Naive thymus-derived CD4-positive, alpha-beta T cell (primary cell): ENCODE measurements at regions of chr2 and their contacts with region 1.

Region 1: GRCh38 chr2:102520028-102520427 is 47.0 kb downstream of the SLC9A4 start:
- DNase-seq: peak in 3 of 9 donors; percentile 3 to 7 (median 5)
- ATAC-seq: peak; percentile 64
- H3K4me3 ChIP-seq: no peak overlapping the region
- H3K4me3 Mint-ChIP-seq: no peak overlapping the region
- H3K27ac ChIP-seq: no peak overlapping the region
- H3K27ac Mint-ChIP-seq: no peak overlapping the region
- H3K4me1 ChIP-seq: no peaks in the 10 kb centered on the region
- H3K4me1 Mint-ChIP-seq: peaks cover 0 to 10% (median 0%) of the 10 kb centered on the region in 7 donors
- H3K27me3 ChIP-seq: no peaks in the 10 kb centered on the region
- H3K27me3 Mint-ChIP-seq: peaks cover 0 to 5% (median 0%) of the 10 kb centered on the region in 5 donors

Region 2: GRCh38 chr2:102615622-102616436 is 95.8 kb after region 1 on chr2:
- CTCF ChIA-PET with region 1: no interaction called
- POLR2A ChIA-PET with region 1: no interaction called
- intact Hi-C with region 1: loop called in 1 of 2 experiments (anchors 5 kb)
- DNase-seq: peak in 5 of 9 donors; percentile 10 to 41 (median 13)
- ATAC-seq: peak; percentile 86
- H3K4me3 ChIP-seq: no peak overlapping the region
- H3K4me3 Mint-ChIP-seq: no peak overlapping the region
- H3K27ac ChIP-seq: no peak overlapping the region
- H3K27ac Mint-ChIP-seq: no peak overlapping the region
- H3K4me1 ChIP-seq: no peaks in the 10 kb centered on the region
- H3K4me1 Mint-ChIP-seq: peaks cover 5 to 17% (median 13%) of the 10 kb centered on the region in 7 donors
- H3K27me3 ChIP-seq: peaks cover 0 to 5% of the 10 kb centered on the region in 2 donors
- H3K27me3 Mint-ChIP-seq: peaks cover 39 to 62% (median 57%) of the 10 kb centered on the region in 5 donors

Region 3: GRCh38 chr2:102703748-102704147 is 183.7 kb after region 1 on chr2:
- CTCF ChIA-PET with region 1: no interaction called
- POLR2A ChIA-PET with region 1: no interaction called
- intact Hi-C with region 1: loop called in 1 of 2 experiments (anchors 10 kb)
- DNase-seq: peak in 3 of 9 donors; percentile 11 to 15 (median 11)
- ATAC-seq: no peak
- H3K4me3 ChIP-seq: no peak overlapping the region
- H3K4me3 Mint-ChIP-seq: no peak overlapping the region
- H3K27ac ChIP-seq: no peak overlapping the region
- H3K27ac Mint-ChIP-seq: no peak overlapping the region
- H3K4me1 ChIP-seq: no peaks in the 10 kb centered on the region
- H3K4me1 Mint-ChIP-seq: no peaks in the 10 kb centered on the region
- H3K27me3 ChIP-seq: no peaks in the 10 kb centered on the region
- H3K27me3 Mint-ChIP-seq: peaks cover 5 to 21% (median 9%) of the 10 kb centered on the region in 5 donors